Mammary epithelial cell (primary cell): ENCODE measurements at regions of chrX and their contacts with region 1.

Region 1: GRCh38 chrX:110341189-110342035 is 17.2 kb upstream of the RTL9 start:
- DNase-seq: peak; percentile 83
- H3K4me3 ChIP-seq: no peak overlapping the region
- H3K27ac ChIP-seq: peak overlapping the region; percentile 89
- H3K4me1 ChIP-seq: peaks cover 10% of the 10 kb centered on the region
- H3K27me3 ChIP-seq: no peaks in the 10 kb centered on the region
- CTCF ChIP-seq: no peak

Region 2: GRCh38 chrX:110375320-110375719 is 33.9 kb after region 1 on chrX:
- CTCF ChIA-PET with region 1: no interaction called
- dilution Hi-C with region 1: no loop called
- in situ Hi-C with region 1: no loop called
- intact Hi-C with region 1: loop called (anchors 5 kb)
- DNase-seq: no peak
- H3K4me3 ChIP-seq: no peak overlapping the region
- H3K27ac ChIP-seq: no peak overlapping the region
- H3K4me1 ChIP-seq: no peaks in the 10 kb centered on the region
- H3K27me3 ChIP-seq: no peaks in the 10 kb centered on the region
- CTCF ChIP-seq: no peak

Region 3: GRCh38 chrX:110402479-110403230 is 61.2 kb after region 1 on chrX:
- CTCF ChIA-PET with region 1: no interaction called
- dilution Hi-C with region 1: no loop called
- in situ Hi-C with region 1: no loop called
- intact Hi-C with region 1: loop called (anchors 5 kb)
- DNase-seq: peak; percentile 79
- H3K4me3 ChIP-seq: no peak overlapping the region
- H3K27ac ChIP-seq: peak overlapping the region; percentile 82
- H3K4me1 ChIP-seq: peaks cover 23% of the 10 kb centered on the region
- H3K27me3 ChIP-seq: no peaks in the 10 kb centered on the region
- CTCF ChIP-seq: no peak

Region 4: DNA sequence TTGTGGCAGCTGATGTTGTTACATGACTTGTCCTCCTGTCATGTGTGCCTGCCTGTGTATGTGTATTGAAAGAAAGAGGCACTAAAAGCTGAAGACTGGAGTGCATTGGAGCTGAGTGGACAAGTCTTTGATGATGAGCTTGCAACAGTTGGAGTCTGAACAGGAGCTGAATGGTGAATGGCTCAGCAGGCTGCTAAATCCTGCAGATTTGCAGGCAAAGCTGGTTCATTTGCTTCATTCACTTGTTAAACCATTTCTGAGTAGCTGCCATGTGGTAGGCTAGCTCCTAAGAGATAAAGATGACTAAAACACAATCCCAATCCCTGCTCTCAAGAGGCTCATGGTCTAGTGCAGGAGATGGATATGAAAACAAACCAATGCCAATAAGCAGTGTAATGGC is 236.9 kb after region 1 on chrX:
- CTCF ChIA-PET with region 1: no interaction called
- dilution Hi-C with region 1: no loop called
- in situ Hi-C with region 1: no loop called
- intact Hi-C with region 1: no loop called
- DNase-seq: no peak
- H3K4me3 ChIP-seq: no peak overlapping the region
- H3K27ac ChIP-seq: no peak overlapping the region
- H3K4me1 ChIP-seq: no peaks in the 10 kb centered on the region
- H3K27me3 ChIP-seq: peaks cover 6% of the 10 kb centered on the region
- CTCF ChIP-seq: no peak